ENCODE measurements at regions of chr3 and their contacts with region 1.

Region 1: GRCh38 chr3:127544192-127544802 is 46.2 kb downstream of the TPRA1 start:
- DNase-seq: peak; percentile 84
- ATAC-seq: peak; percentile 69
- H3K4me3 Mint-ChIP-seq: no peak overlapping the region
- H3K27ac Mint-ChIP-seq: no peak overlapping the region
- H3K4me1 Mint-ChIP-seq: peaks cover 10% of the 10 kb centered on the region
- H3K27me3 Mint-ChIP-seq: no peaks in the 10 kb centered on the region

Region 2: DNA sequence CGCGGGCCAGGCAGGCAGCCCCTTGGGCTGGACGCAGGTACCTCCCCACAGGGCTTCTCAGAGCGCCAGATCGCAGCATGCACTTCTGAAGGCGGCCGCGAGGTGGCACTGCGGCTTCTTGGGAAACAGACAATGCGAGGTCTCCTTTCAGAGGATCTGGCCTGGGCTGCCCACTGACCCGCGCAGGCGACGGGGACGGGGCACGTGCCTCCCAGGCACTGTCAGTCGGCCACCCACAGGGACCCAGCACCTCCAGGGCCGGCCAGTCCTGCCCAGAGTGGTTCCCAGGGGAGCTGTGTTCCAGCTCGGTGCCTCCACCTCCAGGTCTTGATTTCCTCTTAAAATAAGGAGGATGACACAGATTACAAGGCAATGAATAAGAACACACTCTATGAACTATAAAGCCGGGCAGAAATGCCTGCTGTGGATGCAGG is 865.0 kb before region 1 on chr3:
- CTCF ChIA-PET with region 1: interaction called, 6 read pairs
- POLR2A ChIA-PET with region 1: no interaction called
- intact Hi-C with region 1: loop called (anchors 1 to 5 kb)
- DNase-seq: peak; percentile 88
- ATAC-seq: peak; percentile 84
- H3K4me3 Mint-ChIP-seq: no peak overlapping the region
- H3K27ac Mint-ChIP-seq: no peak overlapping the region
- H3K4me1 Mint-ChIP-seq: peaks cover 4% of the 10 kb centered on the region
- H3K27me3 Mint-ChIP-seq: peaks cover 3% of the 10 kb centered on the region

Region 3: DNA sequence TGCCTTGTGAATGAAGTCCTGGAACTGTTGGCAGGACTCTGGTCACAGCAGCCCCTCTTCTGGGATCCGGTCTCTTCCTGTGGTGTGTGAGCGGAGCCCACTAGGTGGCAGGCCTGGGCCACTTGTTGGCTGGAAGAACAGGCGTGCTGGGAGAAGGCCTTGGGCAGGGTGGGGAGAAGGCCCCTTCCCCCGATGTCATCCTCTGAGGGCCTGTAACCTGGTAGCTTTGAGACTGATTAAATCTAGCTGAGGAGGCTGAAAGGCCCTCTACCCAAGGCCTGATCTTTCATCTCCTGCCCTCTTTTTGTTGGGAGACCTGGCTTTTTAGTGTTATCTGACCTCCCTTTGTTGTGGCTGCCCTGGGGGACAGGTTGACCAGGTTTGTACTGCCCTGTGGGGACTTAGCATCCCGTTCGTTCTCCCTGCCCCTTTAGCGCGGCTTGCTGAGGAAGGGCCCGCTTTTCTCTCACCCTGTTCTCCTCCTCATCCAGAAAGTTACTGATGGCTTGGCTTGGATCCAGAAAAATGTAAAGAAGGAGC is 791.9 kb before region 1 on chr3:
- CTCF ChIA-PET with region 1: no interaction called
- POLR2A ChIA-PET with region 1: no interaction called
- intact Hi-C with region 1: loop called in 1 of 2 experiments (anchors 1 kb)
- DNase-seq: peak; percentile 78
- ATAC-seq: peak; percentile 90
- H3K4me3 Mint-ChIP-seq: no peak overlapping the region
- H3K27ac Mint-ChIP-seq: no peak overlapping the region
- H3K4me1 Mint-ChIP-seq: no peaks in the 10 kb centered on the region
- H3K27me3 Mint-ChIP-seq: no peaks in the 10 kb centered on the region

Region 4: GRCh38 chr3:127002195-127003174 is 541.8 kb before region 1 on chr3:
- CTCF ChIA-PET with region 1: no interaction called
- POLR2A ChIA-PET with region 1: no interaction called
- intact Hi-C with region 1: no loop called
- DNase-seq: peak; percentile 20
- ATAC-seq: no peak
- H3K4me3 Mint-ChIP-seq: no peak overlapping the region
- H3K27ac Mint-ChIP-seq: no peak overlapping the region
- H3K4me1 Mint-ChIP-seq: no peaks in the 10 kb centered on the region
- H3K27me3 Mint-ChIP-seq: no peaks in the 10 kb centered on the region

Region 5: DNA sequence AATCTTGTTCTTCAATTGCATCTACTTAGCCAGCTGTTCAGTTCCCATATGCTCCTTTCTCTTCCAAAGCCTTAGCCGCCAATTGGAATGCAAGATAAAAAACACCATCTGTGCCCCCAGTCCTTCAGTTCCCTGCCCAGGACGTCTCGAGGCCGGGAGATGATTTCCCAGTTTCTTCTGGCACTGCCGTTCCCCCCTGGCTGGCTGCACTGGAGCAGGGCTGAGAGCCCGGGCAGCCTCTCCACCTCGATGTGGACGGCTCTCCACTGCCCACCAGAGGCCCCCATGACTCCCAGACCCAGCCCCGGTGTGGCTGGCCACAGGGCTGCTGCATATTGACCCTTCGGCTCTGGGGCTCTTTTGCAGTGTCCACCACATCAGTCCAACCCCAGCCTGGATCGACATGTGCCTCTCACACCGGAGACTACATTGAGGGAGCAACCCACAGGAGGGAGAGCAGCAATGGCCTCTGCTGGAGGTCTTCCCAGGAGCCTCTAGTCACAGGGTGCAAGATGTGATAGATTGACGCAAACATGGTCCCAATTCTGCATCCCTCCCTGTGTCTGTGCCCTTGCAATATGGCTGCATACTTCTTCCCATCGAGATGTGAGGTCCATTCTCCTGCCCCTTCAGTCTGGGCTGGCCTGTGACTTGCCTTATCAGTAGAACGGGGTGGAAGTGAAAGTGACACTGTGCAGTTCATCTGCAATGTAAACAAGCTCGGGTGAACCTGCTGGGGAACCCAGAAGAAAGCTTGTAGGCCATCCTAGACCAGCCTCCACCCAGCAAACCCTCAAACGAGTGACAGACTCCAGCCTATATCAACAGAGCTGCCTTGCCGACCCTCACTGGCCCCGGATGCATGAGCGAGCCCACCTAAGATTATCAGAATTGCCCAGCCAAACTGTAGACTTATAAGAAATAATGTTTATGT is 204.1 kb before region 1 on chr3:
- CTCF ChIA-PET with region 1: no interaction called
- POLR2A ChIA-PET with region 1: no interaction called
- intact Hi-C with region 1: no loop called
- DNase-seq: no peak
- ATAC-seq: no peak
- H3K4me3 Mint-ChIP-seq: no peak overlapping the region
- H3K27ac Mint-ChIP-seq: no peak overlapping the region
- H3K4me1 Mint-ChIP-seq: no peaks in the 10 kb centered on the region
- H3K27me3 Mint-ChIP-seq: peaks cover 37% of the 10 kb centered on the region

Region 6: GRCh38 chr3:127374086-127375010 is 169.9 kb before region 1 on chr3:
- CTCF ChIA-PET with region 1: interaction called, 17 read pairs
- POLR2A ChIA-PET with region 1: no interaction called
- intact Hi-C with region 1: loop called (anchors 1 to 10 kb)
- DNase-seq: peak; percentile 64
- ATAC-seq: no peak
- H3K4me3 Mint-ChIP-seq: no peak overlapping the region
- H3K27ac Mint-ChIP-seq: no peak overlapping the region
- H3K4me1 Mint-ChIP-seq: no peaks in the 10 kb centered on the region
- H3K27me3 Mint-ChIP-seq: peaks cover 8% of the 10 kb centered on the region

Region 7: GRCh38 chr3:127455541-127456450 is 88.5 kb before region 1 on chr3:
- CTCF ChIA-PET with region 1: interaction called, 9 read pairs
- POLR2A ChIA-PET with region 1: no interaction called
- intact Hi-C with region 1: loop called (anchors 2 to 5 kb)
- DNase-seq: peak; percentile 86
- ATAC-seq: peak; percentile 95
- H3K4me3 Mint-ChIP-seq: no peak overlapping the region
- H3K27ac Mint-ChIP-seq: no peak overlapping the region
- H3K4me1 Mint-ChIP-seq: peaks cover 13% of the 10 kb centered on the region
- H3K27me3 Mint-ChIP-seq: peaks cover 60% of the 10 kb centered on the region